ENCODE measurements at regions of chr2 and their contacts with region 1.

Region 1: GRCh38 chr2:16608661-16609643 is 56.7 kb downstream of the CYRIA start:
- DNase-seq: peak; percentile 90
- H3K4me3 ChIP-seq: no peak overlapping the region
- H3K27ac ChIP-seq: peak overlapping the region; percentile 60
- H3K4me1 ChIP-seq: peaks cover 27% of the 10 kb centered on the region
- H3K27me3 ChIP-seq: no peaks in the 10 kb centered on the region
- CTCF ChIP-seq: peak; percentile 89

Region 2: DNA sequence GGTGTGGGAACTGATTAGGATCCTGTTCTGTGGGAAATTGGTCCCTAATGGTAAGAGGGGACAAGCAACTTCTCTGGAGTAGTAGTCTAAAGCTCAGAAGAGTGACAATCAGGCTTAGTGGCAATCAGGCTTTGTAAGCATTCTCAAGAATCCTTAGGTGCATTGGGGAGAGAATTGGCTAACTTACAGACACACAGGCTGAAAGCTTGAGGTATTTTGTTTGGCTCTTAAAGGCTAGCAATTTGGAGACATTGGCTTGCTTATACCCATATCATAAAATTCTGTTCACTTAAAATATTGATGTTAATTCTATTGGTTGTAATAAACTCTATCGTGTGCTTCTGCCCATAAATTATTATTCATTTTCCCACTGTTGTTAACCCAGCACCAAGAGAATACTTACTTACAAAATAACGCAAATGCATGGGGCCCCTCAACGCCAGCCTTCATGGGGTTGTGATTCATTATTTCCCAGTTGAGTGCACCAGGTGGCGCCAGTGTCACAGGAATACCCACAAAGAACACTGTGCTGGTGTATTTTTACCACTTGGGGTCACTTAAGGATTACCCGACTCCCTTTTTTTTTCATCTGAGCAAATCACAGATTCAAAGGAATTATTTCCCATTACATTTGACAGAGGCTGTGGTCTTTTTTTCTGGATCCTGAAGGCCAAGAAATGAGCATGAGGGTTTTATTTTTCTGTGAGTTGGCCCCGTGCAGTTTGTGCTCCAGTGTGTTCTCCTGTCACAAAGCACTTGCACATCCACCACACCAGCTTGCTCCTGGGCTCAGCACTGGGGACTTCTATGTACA is 971.8 kb before region 1 on chr2:
- CTCF ChIA-PET with region 1: no interaction called
- POLR2A ChIA-PET with region 1: no interaction called
- intact Hi-C with region 1: loop called (anchors 5 kb)
- DNase-seq: peak; percentile 79
- H3K4me3 ChIP-seq: no peak overlapping the region
- H3K27ac ChIP-seq: no peak overlapping the region
- H3K4me1 ChIP-seq: peaks cover 9% of the 10 kb centered on the region
- H3K27me3 ChIP-seq: no peaks in the 10 kb centered on the region
- CTCF ChIP-seq: peak; percentile 92

Region 3: DNA sequence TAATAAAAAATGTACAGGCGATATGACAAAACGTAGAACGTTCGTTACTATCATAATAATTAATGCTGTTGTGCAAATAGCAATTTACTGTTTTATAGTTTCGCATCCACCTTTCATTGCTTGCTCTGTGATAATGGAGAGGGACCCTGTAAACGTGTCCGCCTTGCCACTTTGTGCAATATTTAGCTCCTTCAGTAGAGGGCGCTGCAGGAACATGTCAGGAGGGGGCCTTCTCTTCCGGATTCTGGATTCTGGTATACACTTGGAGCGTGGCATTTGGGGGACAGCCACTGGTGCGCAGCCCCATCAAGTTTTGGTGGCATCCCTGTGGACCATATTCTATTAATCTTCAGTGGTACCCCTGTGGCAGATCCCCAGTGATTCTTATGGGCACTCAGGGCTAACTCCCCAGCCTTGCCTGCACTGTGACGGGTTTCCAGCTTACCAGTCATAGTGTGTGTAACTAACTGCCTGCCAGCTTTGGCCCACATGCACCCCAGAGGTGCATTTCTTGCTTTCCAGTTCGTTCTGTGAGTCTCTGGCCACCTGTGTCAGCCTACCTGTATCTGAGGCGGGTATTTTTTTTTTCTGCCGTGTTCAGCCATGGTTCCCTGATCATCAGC is 83.6 kb before region 1 on chr2:
- CTCF ChIA-PET with region 1: interaction called, 3 read pairs
- POLR2A ChIA-PET with region 1: no interaction called
- intact Hi-C with region 1: loop called (anchors 2 kb)
- DNase-seq: peak; percentile 75
- H3K4me3 ChIP-seq: no peak overlapping the region
- H3K27ac ChIP-seq: no peak overlapping the region
- H3K4me1 ChIP-seq: peaks cover 18% of the 10 kb centered on the region
- H3K27me3 ChIP-seq: no peaks in the 10 kb centered on the region
- CTCF ChIP-seq: peak; percentile 86

Region 4: DNA sequence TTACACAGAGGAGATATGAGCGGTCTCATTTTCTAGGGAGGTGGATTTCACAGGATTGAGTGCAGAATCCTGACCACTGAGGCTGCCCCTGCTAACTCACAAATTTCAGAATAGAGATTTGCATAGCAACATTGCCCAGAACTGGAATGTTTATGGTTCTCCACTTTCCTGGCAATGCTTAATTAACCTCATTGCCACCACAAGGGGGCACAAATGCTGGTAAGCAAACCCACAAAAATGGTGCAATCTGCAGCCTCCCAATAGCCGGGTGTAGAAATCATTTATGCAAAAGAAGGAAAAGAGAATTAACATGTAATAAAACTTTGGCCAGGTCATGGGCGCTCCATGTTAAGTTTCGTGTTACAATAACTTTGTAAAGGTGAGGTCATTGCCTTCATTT is 55.7 kb before region 1 on chr2:
- CTCF ChIA-PET with region 1: no interaction called
- POLR2A ChIA-PET with region 1: no interaction called
- intact Hi-C with region 1: loop called (anchors 1 kb)
- DNase-seq: peak; percentile 78
- H3K4me3 ChIP-seq: no peak overlapping the region
- H3K27ac ChIP-seq: no peak overlapping the region
- H3K4me1 ChIP-seq: peaks cover 4% of the 10 kb centered on the region
- H3K27me3 ChIP-seq: no peaks in the 10 kb centered on the region
- CTCF ChIP-seq: peak; percentile 81

Region 5: GRCh38 chr2:16684676-16685330 is 75.9 kb after region 1 on chr2:
- CTCF ChIA-PET with region 1: interaction called, 3 read pairs
- POLR2A ChIA-PET with region 1: no interaction called
- intact Hi-C with region 1: loop called (anchors 1 kb)
- DNase-seq: peak; percentile 79
- H3K4me3 ChIP-seq: peak overlapping the region; percentile 8
- H3K27ac ChIP-seq: peak overlapping the region; percentile 100
- H3K4me1 ChIP-seq: peaks cover 67% of the 10 kb centered on the region
- H3K27me3 ChIP-seq: no peaks in the 10 kb centered on the region
- CTCF ChIP-seq: no peak

Region 6: GRCh38 chr2:16756831-16757644 is 148.1 kb after region 1 on chr2:
- CTCF ChIA-PET with region 1: interaction called, 43 read pairs
- POLR2A ChIA-PET with region 1: no interaction called
- intact Hi-C with region 1: loop called (anchors 1 kb)
- DNase-seq: peak; percentile 85
- H3K4me3 ChIP-seq: no peak overlapping the region
- H3K27ac ChIP-seq: peak overlapping the region; percentile 60
- H3K4me1 ChIP-seq: peaks cover 8% of the 10 kb centered on the region
- H3K27me3 ChIP-seq: no peaks in the 10 kb centered on the region
- CTCF ChIP-seq: peak; percentile 93

Region 7: DNA sequence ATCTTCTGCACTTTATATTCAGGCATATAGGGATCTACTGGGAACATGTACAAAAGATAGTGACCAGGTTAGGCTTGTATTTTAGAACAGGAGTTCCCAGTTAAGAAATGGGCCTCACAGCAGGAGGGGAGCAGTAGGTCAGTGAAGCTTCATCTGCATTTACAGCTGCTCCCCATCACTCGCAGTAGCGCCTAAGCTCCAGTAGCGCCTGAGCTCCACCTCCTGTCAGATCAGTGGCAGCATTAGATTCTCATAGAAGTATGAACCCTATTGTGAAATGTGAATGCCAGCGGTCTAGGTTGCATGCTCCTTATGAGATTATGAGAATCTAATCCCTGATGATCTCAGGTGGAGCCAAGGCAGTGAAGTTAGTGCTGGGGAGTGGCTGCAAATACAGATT is 281.1 kb after region 1 on chr2:
- CTCF ChIA-PET with region 1: no interaction called
- POLR2A ChIA-PET with region 1: no interaction called
- intact Hi-C with region 1: loop called (anchors 10 kb)
- DNase-seq: peak; percentile 5
- H3K4me3 ChIP-seq: no peak overlapping the region
- H3K27ac ChIP-seq: no peak overlapping the region
- H3K4me1 ChIP-seq: no peaks in the 10 kb centered on the region
- H3K27me3 ChIP-seq: peaks cover 17% of the 10 kb centered on the region
- CTCF ChIP-seq: peak; percentile 24; the same call in 1 of the 2 replicates